ENCODE measurements at regions of chr1 and their contacts with region 1.

Region 1: DNA sequence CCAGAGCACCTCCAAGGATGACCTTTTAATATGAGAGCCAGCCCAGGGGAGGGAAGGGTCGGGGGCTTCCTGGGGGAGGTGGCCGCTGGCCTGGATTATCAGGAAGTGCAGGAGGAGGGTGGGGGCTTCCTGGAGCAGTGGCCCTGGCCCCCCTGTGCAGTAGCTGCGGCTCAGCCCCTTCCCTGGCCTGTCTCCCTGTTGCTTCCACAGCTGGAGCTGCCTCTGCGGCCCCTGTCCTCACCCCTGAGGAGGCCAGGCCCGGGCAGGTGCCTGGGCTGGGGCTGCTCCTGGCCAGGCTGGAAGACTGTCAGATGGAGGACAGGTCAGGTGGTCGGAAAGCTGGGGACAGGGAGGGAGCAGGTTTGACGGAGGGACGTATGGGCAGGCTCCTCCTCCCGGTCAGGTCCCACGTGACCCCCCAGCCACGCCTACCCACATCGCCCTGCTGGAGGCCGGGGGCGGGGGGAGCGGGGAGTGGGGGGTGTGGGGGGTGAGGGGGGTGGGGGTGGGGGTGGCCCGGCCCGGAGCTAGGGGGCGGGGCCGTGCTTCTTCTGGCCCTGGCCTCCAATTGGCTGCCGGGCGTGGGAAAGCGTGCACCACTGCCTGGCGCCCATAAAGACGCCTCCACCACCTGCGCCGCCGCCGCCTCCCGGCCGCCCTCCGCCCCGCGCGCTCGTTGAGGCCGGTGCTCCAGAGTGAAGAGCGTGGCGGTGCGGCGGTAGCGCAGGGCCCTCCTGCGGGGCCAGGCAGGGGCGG is 10.2 kb upstream of the TNFRSF14 start:
- DNase-seq: peak; percentile 90 to 91
- ATAC-seq: peak; percentile 46 to 60 (median 51)
- H3K4me3 ChIP-seq: peak overlapping the region; percentile 39 to 74 (median 59)
- H3K27ac ChIP-seq: peak overlapping the region; percentile 62 to 100 (median 98)
- H3K4me1 ChIP-seq: peaks cover 43 to 81% (median 73%) of the 10 kb centered on the region in 9 donors
- H3K27me3 ChIP-seq: peaks cover 0 to 14% (median 2%) of the 10 kb centered on the region in 7 donors
- CTCF ChIP-seq: no peak

Region 2: GRCh38 chr1:2194898-2195673 is 350.9 kb before region 1 on chr1:
- intact Hi-C with region 1: loop called in 4 of 10 experiments (anchors 5 to 10 kb)
- DNase-seq: peak; percentile 92
- ATAC-seq: peak; percentile 77 to 86 (median 82)
- H3K4me3 ChIP-seq: peak overlapping the region; percentile 47 to 78 (median 70)
- H3K27ac ChIP-seq: peak overlapping the region; percentile 90 to 98 (median 94)
- H3K4me1 ChIP-seq: peaks cover 36 to 71% (median 65%) of the 10 kb centered on the region in 9 donors
- H3K27me3 ChIP-seq: no peaks in the 10 kb centered on the region
- CTCF ChIP-seq: peak; percentile 91 to 98 (median 95)

Region 3: GRCh38 chr1:2204516-2205190 is 341.3 kb before region 1 on chr1:
- intact Hi-C with region 1: loop called in 4 of 10 experiments (anchors 5 to 10 kb)
- DNase-seq: peak; percentile 86 to 91
- ATAC-seq: peak; percentile 64 to 75 (median 71)
- H3K4me3 ChIP-seq: peak overlapping the region; percentile 26 to 74 (median 58)
- H3K27ac ChIP-seq: peak overlapping the region; percentile 76 to 96 (median 90)
- H3K4me1 ChIP-seq: peaks cover 37 to 78% (median 66%) of the 10 kb centered on the region in 9 donors
- H3K27me3 ChIP-seq: no peaks in the 10 kb centered on the region
- CTCF ChIP-seq: no peak

Region 4: GRCh38 chr1:2412519-2413233 is 133.3 kb before region 1 on chr1 and contains the start of gene PEX10:
- intact Hi-C with region 1: loop called (anchors 1 to 2 kb)
- DNase-seq: peak; percentile 96 to 99
- ATAC-seq: peak; percentile 94 to 96 (median 94)
- H3K4me3 ChIP-seq: peak within 1 kb of the TSS; percentile 74 to 99 (median 86)
- H3K27ac ChIP-seq: peak within 1 kb of the TSS; percentile 76 to 93 (median 90)
- H3K4me1 ChIP-seq: peaks cover 3 to 37% (median 25%) of the 10 kb centered on the region in 9 donors
- H3K27me3 ChIP-seq: peaks cover 0 to 27% (median 20%) of the 10 kb centered on the region in 7 donors
- CTCF ChIP-seq: no peak
- total RNA-seq, gene PEX10: 14.6 to 26.0 (median 18.6) TPM

Region 5: GRCh38 chr1:2468041-2468472 is 77.9 kb before region 1 on chr1:
- intact Hi-C with region 1: loop called in 1 of 10 experiments (anchors 10 kb)
- DNase-seq: peak in 1 of 2 donors; percentile 38
- ATAC-seq: peak in 2 of 8 donors; percentile 39 to 41
- H3K4me3 ChIP-seq: no peak overlapping the region
- H3K27ac ChIP-seq: no peak overlapping the region
- H3K4me1 ChIP-seq: peaks cover 0 to 4% (median 0%) of the 10 kb centered on the region in 9 donors
- H3K27me3 ChIP-seq: peaks cover 26 to 95% (median 90%) of the 10 kb centered on the region in 7 donors
- CTCF ChIP-seq: no peak

Region 6: DNA sequence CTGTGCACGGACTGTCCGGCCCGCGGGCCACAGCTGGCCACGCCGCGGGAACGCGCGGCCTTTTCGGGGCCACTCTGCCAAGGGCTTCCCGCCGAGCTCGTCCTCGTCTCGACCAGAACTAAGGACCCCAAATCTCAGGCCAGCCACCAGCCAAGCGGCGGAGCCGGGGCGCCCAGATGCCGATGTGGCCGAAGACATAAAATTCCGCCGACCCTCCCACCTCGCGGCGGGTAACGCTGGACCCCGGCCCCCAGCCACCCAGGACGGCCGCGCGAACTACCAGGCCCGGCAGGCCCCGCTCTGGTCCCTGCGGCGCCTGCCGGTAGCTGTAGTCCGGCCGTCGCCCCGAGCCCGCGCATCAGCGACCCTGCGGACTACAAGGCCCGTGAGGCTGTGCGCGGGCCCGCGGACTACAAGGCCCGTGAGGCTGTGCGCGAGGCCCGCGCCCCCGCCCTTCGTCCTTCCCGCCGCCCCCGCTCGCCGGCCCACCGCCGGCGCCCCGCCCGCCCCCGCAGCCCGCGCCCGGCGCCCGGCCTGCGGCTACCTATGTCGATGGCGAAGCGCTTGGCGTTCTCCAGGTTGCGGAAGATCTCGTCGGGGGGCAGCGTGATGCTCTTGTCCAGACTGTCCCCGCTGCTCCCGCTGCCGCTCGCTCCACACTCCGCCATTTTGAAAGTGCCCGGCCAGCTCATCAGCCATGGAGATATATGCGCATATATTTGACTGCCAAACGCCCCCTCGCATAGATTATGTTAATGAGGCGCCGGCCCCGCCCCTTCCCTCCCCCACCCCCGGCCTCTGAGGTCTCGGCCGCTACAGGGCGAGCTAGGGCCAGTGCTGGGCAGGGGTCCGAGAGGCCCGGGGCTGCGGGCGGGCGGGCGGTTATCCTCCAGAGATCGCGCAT is 19.8 kb before region 1 on chr1 and contains the start of gene PANK4:
- intact Hi-C with region 1: loop called in 3 of 10 experiments (anchors 2 kb)
- DNase-seq: peak; percentile 93
- ATAC-seq: peak; percentile 83 to 92 (median 89)
- H3K4me3 ChIP-seq: peak within 1 kb of the TSS; percentile 64 to 100 (median 90)
- H3K27ac ChIP-seq: peak within 1 kb of the TSS; percentile 75 to 94 (median 84)
- H3K4me1 ChIP-seq: peaks cover 39 to 72% (median 69%) of the 10 kb centered on the region in 9 donors
- H3K27me3 ChIP-seq: peaks cover 0 to 41% (median 4%) of the 10 kb centered on the region in 7 donors
- CTCF ChIP-seq: peak in 5 of 9 donors; percentile 8 to 39 (median 25)
- total RNA-seq, gene PANK4: 29.8 to 56.4 (median 35.2) TPM

Region 7: GRCh38 chr1:2586154-2587070 is 40.5 kb after region 1 on chr1 and contains the start of gene PRXL2B:
- intact Hi-C with region 1: loop called in 2 of 10 experiments (anchors 1 to 5 kb)
- DNase-seq: peak; percentile 99 to 100
- ATAC-seq: peak; percentile 92 to 96 (median 94)
- H3K4me3 ChIP-seq: peak within 1 kb of the TSS; percentile 51 to 98 (median 93)
- H3K27ac ChIP-seq: peak within 1 kb of the TSS; percentile 96 to 100 (median 98)
- H3K4me1 ChIP-seq: peaks cover 9 to 36% (median 25%) of the 10 kb centered on the region in 9 donors
- H3K27me3 ChIP-seq: no peaks in the 10 kb centered on the region
- CTCF ChIP-seq: no peak
- total RNA-seq, gene PRXL2B: 3.7 to 10.3 (median 5.3) TPM

Measured in heart right ventricle (tissue), 16 donors.